ENCODE measurements at regions of chr10 and their contacts with region 1.

Region 1: GRCh38 chr10:73413528-73414229 is at the start of gene ANXA7:
- DNase-seq: peak; percentile 92
- ATAC-seq: peak; percentile 95
- H3K4me3 ChIP-seq: peak within 1 kb of the TSS; percentile 70 to 94 (median 93)
- H3K4me3 Mint-ChIP-seq: peak within 1 kb of the TSS; percentile 96
- H3K27ac ChIP-seq: peak within 1 kb of the TSS; percentile 84 to 97
- H3K27ac Mint-ChIP-seq: peak within 1 kb of the TSS; percentile 96
- H3K4me1 ChIP-seq: peaks cover 15 to 21% of the 10 kb centered on the region in 2 donors
- H3K4me1 Mint-ChIP-seq: peaks cover 50% of the 10 kb centered on the region
- H3K27me3 ChIP-seq: no peaks in the 10 kb centered on the region
- H3K27me3 Mint-ChIP-seq: no peaks in the 10 kb centered on the region
- CTCF ChIP-seq: peak; percentile 37
- total RNA-seq, gene ANXA7: 86.7 and 90.0 TPM in 2 replicates

Region 2: DNA sequence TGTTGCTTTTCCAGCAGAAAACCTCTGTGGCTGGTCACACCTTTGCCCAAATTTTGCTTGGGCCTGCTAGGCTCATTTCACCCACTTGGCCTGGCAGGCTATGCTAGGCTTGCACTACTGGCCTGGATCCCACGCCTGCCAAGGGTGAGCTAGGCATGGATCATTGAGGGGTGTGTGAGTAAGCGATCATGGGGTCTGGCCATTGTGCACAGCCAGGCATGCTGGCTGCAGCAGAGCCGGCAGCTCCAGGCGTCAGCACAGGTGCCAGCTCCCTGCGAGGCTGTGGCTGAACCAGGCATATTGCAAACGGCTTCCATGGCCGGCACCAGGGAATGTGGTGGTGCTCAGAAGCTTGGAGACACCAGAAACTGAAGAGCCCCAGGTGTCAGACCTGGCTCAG is 74.2 kb before region 1 on chr10:
- CTCF ChIA-PET with region 1: no interaction called
- POLR2A ChIA-PET with region 1: no interaction called
- intact Hi-C with region 1: no loop called
- DNase-seq: no peak
- ATAC-seq: no peak
- H3K4me3 ChIP-seq: no peak overlapping the region
- H3K4me3 Mint-ChIP-seq: no peak overlapping the region
- H3K27ac ChIP-seq: no peak overlapping the region
- H3K27ac Mint-ChIP-seq: no peak overlapping the region
- H3K4me1 ChIP-seq: no peaks in the 10 kb centered on the region
- H3K4me1 Mint-ChIP-seq: no peaks in the 10 kb centered on the region
- H3K27me3 ChIP-seq: no peaks in the 10 kb centered on the region
- H3K27me3 Mint-ChIP-seq: no peaks in the 10 kb centered on the region
- CTCF ChIP-seq: no peak

Region 3: DNA sequence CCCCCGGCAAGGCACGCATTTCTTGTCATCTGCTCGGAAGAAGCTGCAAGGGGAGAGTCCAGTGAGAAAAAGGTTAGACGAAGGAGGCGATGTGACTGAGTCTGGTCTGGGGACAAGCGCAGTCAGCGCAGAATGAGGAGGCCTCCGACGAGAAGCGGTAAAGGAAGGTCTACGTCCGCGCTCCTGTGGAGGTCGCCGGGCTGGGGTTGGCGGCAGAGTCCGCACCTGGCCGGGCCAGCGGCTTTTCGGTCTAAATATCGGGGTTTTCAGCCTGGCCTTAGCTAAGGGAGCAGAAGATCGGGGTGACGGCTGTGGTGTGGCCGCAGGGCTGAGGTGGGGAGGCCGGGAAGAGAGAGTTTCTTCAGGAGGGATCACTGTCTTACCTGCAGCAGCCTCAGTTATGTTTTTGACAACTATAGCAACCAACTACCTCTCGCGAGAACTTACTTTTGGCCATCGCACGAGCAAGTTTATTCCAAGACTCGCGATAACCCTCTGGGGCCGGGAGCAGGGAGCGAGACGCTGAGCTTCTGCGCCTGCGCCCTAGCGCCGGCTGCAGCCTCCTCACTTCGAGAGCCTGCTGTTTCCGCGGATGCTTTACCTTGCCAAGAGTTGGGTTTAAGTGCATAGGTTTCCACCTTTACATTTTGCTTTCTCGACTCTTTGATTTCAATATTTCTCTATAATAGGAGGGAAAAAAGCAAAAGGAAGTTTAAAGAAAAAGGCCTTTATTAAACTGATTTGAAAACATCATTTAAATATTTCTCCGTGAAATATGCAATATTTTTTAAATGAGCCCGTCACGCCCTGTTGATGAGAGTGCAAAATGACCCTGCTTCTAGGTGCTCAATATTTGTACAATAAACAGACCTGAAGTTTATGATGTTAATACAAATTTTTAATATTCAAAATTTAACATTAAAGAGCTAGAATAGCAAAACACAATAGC is 55.1 kb before region 1 on chr10 and contains the start of gene CFAP70:
- CTCF ChIA-PET with region 1: no interaction called
- POLR2A ChIA-PET with region 1: interaction called, 5 read pairs
- intact Hi-C with region 1: loop called (anchors 1 kb)
- DNase-seq: peak; percentile 95
- ATAC-seq: peak; percentile 97
- H3K4me3 ChIP-seq: peak within 1 kb of the TSS; percentile 58 to 84 (median 73)
- H3K4me3 Mint-ChIP-seq: peak within 1 kb of the TSS; percentile 98
- H3K27ac ChIP-seq: peak within 1 kb of the TSS; percentile 26 to 79
- H3K27ac Mint-ChIP-seq: peak within 1 kb of the TSS; percentile 94
- H3K4me1 ChIP-seq: peaks cover 6 to 11% of the 10 kb centered on the region in 2 donors
- H3K4me1 Mint-ChIP-seq: peaks cover 15% of the 10 kb centered on the region
- H3K27me3 ChIP-seq: peaks cover 0 to 6% (median 0%) of the 10 kb centered on the region in 4 experiments
- H3K27me3 Mint-ChIP-seq: peaks cover 4% of the 10 kb centered on the region
- CTCF ChIP-seq: no peak
- total RNA-seq, gene CFAP70: 2.9 and 3.6 TPM in 2 replicates

Region 4: DNA sequence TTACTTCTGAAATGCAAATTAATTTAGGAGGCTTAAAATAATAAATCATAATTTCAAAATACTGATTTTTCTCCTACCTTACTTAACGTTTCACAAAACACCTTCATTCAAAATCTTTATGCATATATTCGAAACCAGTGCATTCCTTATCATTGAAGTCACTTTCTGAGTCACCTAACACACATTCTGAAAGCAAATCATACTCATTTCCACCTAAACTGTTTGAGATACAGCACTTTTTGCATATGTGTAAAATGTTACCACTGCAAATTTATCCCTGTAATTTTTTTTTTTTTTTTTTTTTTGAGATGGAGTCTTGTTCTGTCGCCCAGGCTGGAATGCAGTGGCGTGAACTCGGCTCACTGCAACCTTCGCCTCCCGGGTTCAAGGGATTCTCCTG is 66.5 kb after region 1 on chr10:
- CTCF ChIA-PET with region 1: no interaction called
- POLR2A ChIA-PET with region 1: no interaction called
- intact Hi-C with region 1: no loop called
- DNase-seq: no peak
- ATAC-seq: no peak
- H3K4me3 ChIP-seq: no peak overlapping the region
- H3K4me3 Mint-ChIP-seq: no peak overlapping the region
- H3K27ac ChIP-seq: no peak overlapping the region
- H3K27ac Mint-ChIP-seq: no peak overlapping the region
- H3K4me1 ChIP-seq: no peaks in the 10 kb centered on the region
- H3K4me1 Mint-ChIP-seq: peaks cover 21% of the 10 kb centered on the region
- H3K27me3 ChIP-seq: no peaks in the 10 kb centered on the region
- H3K27me3 Mint-ChIP-seq: no peaks in the 10 kb centered on the region
- CTCF ChIP-seq: no peak

Region 5: DNA sequence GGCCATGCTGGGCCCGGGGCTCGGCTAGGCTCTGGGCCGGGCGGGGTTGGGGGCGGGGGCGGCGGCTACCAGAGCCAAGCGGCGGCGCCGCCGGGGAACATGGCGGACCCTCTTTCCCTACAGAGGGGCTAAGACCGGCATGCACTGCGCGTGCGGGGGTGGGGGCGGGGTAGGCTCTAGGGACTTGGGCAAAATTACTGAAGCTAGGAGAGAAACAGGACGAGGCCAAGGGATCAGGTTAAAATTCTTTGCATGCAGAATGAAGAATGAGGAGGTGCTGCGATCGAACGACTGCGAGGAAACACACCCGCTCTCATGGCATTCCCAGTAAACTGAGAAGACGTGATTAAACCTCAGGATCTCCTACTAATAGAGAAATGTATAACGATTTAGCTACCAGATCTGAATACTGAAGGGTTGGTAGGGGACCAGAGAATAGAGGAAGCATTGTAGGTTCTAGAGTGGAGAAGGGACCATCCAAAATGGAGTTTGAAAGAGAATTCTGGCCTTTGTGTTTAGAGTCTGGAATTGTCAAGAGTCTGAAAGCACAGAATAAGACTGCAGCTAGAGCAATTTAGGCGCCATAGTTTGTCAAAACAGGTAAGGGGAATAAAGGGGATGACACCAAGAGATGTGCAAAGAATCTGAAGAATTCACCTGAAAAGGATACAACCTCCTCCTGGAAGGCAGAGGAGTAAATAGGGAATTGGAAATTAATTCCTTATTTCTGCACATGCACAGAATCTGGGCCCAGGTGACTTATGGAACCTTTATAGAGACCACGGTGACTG is 82.4 kb after region 1 on chr10 and contains the start of gene PPP3CB:
- CTCF ChIA-PET with region 1: no interaction called
- POLR2A ChIA-PET with region 1: interaction called, 9 read pairs
- intact Hi-C with region 1: loop called (anchors 1 kb)
- DNase-seq: peak; percentile 94
- ATAC-seq: peak; percentile 70
- H3K4me3 ChIP-seq: peak within 1 kb of the TSS; percentile 63 to 97 (median 85)
- H3K4me3 Mint-ChIP-seq: peak within 1 kb of the TSS; percentile 94
- H3K27ac ChIP-seq: peak within 1 kb of the TSS; percentile 89 to 93
- H3K27ac Mint-ChIP-seq: peak within 1 kb of the TSS; percentile 96
- H3K4me1 ChIP-seq: peaks cover 30 to 40% of the 10 kb centered on the region in 2 donors
- H3K4me1 Mint-ChIP-seq: peaks cover 52% of the 10 kb centered on the region
- H3K27me3 ChIP-seq: no peaks in the 10 kb centered on the region
- H3K27me3 Mint-ChIP-seq: no peaks in the 10 kb centered on the region
- CTCF ChIP-seq: no peak
- total RNA-seq, gene PPP3CB: 51.2 and 52.8 TPM in 2 replicates

Region 6: GRCh38 chr10:73625884-73626752 is 212.4 kb after region 1 on chr10:
- CTCF ChIA-PET with region 1: no interaction called
- POLR2A ChIA-PET with region 1: interaction called, 5 read pairs
- intact Hi-C with region 1: loop called (anchors 1 kb)
- DNase-seq: peak; percentile 96
- ATAC-seq: peak; percentile 91
- H3K4me3 ChIP-seq: peak overlapping the region; percentile 71 to 97 (median 90)
- H3K4me3 Mint-ChIP-seq: peak overlapping the region; percentile 98
- H3K27ac ChIP-seq: peak overlapping the region; percentile 70 to 92
- H3K27ac Mint-ChIP-seq: peak overlapping the region; percentile 97
- H3K4me1 ChIP-seq: peaks cover 11% of the 10 kb centered on the region in 2 donors
- H3K4me1 Mint-ChIP-seq: peaks cover 16% of the 10 kb centered on the region
- H3K27me3 ChIP-seq: no peaks in the 10 kb centered on the region
- H3K27me3 Mint-ChIP-seq: no peaks in the 10 kb centered on the region
- CTCF ChIP-seq: no peak